Vagina (tissue), 2 donors: ENCODE measurements at regions of chr20 and their contacts with region 1.

Region 1: GRCh38 chr20:41738604-41739206 is 120.5 kb upstream of the CHD6 start:
- DNase-seq: peak in 1 of 2 donors; percentile 47
- H3K4me3 ChIP-seq: no peak overlapping the region
- H3K27ac ChIP-seq: no peak overlapping the region
- H3K4me1 ChIP-seq: no peaks in the 10 kb centered on the region
- H3K27me3 ChIP-seq: no peaks in the 10 kb centered on the region
- CTCF ChIP-seq: peak; percentile 31 to 56 (median 50)
- POLR2A ChIP-seq: no peak

Region 2: DNA sequence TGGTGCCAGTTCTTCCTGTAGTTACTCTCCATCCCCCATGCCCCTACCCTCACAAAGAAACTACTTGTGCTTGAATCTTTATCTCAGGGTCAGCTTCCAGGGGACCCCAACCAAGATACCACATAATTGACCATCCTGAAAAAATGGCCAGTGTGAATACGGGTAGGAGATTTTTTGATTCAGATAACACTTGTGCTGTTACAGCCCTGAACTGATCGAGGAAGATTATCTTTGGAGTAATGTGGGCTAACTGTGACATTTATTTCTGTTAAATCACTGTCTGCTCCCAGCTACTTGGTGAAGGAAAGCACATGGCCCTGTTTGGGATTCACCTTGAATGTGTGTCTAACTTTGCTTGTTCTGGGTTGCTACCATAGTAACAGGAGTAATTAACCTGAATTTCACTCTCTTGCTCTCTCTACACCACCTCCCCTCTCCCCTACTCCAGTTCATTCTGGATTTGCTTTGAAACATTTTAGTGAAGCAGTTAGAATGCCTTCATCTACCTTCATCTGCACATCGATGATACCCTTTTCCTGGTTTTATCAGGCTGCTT is 99.0 kb after region 1 on chr20:
- intact Hi-C with region 1: no loop called
- DNase-seq: no peak
- H3K4me3 ChIP-seq: no peak overlapping the region
- H3K27ac ChIP-seq: no peak overlapping the region
- H3K4me1 ChIP-seq: no peaks in the 10 kb centered on the region
- H3K27me3 ChIP-seq: no peaks in the 10 kb centered on the region
- CTCF ChIP-seq: no peak
- POLR2A ChIP-seq: no peak

Region 3: DNA sequence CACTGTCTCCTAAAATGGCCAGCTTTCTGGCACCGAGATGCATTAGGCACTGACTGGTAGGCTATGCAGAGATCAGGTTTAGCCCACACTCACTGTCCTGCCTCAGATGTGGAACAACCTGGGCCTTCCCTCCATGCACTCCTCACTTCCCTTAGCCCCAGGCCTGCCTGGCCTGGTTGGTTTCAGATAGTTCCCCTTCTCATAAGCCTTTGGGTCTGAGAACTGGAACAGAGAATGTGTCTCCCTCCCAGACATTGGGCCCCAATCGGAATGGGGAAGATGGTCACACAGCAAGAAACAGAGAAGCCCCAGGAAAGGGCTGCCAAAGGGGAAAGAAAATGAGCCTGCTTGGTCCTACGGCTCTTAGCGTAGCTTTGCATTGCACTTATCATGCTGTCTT is 641.6 kb after region 1 on chr20:
- intact Hi-C with region 1: no loop called
- DNase-seq: peak in 1 of 2 donors; percentile 29
- H3K4me3 ChIP-seq: no peak overlapping the region
- H3K27ac ChIP-seq: no peak overlapping the region
- H3K4me1 ChIP-seq: no peaks in the 10 kb centered on the region
- H3K27me3 ChIP-seq: no peaks in the 10 kb centered on the region
- CTCF ChIP-seq: no peak
- POLR2A ChIP-seq: no peak

Region 4: GRCh38 chr20:43187476-43188233 is 1449.0 kb after region 1 on chr20:
- intact Hi-C with region 1: loop called (anchors 10 kb)
- DNase-seq: no peak
- H3K4me3 ChIP-seq: no peak overlapping the region
- H3K27ac ChIP-seq: no peak overlapping the region
- H3K4me1 ChIP-seq: peaks cover 16% of the 10 kb centered on the region
- H3K27me3 ChIP-seq: peaks cover 8% of the 10 kb centered on the region
- CTCF ChIP-seq: peak; percentile 72 to 86 (median 82)
- POLR2A ChIP-seq: no peak